HepG2 (cell line): ENCODE measurements at regions of chr17 and their contacts with region 1.

Region 1: DNA sequence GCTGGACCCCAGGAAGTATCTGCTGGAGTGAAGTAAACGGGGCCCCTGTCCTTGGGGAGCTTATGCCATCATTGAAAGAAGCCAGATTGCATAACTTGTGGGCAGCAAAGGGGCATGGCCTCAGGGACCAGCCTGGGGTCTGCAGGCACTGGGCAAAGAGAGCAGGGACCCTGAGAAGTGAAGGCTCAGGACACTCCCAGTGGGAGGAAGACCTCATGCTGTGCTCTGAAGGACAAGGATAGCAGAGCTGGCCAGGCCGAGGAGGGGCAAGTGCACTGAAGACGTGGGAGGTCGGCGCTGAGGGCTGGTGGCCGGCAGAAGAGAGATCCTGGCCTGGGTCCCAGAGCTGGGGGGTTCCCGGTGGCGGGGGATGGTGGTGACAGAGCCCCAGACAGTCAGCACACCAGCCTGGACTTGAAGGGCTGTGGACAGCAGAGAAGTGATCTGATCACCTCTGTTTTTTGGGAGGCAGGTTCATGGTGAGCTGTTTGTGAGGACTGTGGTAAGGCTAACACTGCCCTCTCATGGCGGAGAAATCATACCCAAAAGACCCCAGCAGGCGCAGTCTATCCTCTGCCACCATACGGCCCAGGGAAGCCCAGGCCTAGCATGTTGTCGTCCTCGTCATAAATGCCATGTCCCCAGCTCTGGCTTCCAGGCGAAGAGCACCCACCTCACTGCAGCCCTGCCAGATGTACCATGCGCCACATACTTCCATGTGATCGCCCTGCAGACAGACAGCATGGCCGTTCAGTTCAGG is 7.1 kb upstream of the CNP start:
- DNase-seq: peak; percentile 85
- ATAC-seq: peak; percentile 87
- H3K4me3 ChIP-seq: peak overlapping the region; percentile 55 to 75 (median 57)
- H3K27ac ChIP-seq: peak overlapping the region; percentile 35
- H3K4me1 ChIP-seq: peaks cover 69% of the 10 kb centered on the region
- H3K27me3 ChIP-seq: peaks cover 3 to 25% of the 10 kb centered on the region in 2 experiments; a peak in 4 of 5 replicates
- CTCF ChIP-seq: peak; percentile 98
- EP300 ChIP-seq: no peak
- POLR2A ChIP-seq: peak; percentile 45 to 57; a peak in 3 of 4 replicates
- RAD21 ChIP-seq: peak; percentile 94

Region 2: DNA sequence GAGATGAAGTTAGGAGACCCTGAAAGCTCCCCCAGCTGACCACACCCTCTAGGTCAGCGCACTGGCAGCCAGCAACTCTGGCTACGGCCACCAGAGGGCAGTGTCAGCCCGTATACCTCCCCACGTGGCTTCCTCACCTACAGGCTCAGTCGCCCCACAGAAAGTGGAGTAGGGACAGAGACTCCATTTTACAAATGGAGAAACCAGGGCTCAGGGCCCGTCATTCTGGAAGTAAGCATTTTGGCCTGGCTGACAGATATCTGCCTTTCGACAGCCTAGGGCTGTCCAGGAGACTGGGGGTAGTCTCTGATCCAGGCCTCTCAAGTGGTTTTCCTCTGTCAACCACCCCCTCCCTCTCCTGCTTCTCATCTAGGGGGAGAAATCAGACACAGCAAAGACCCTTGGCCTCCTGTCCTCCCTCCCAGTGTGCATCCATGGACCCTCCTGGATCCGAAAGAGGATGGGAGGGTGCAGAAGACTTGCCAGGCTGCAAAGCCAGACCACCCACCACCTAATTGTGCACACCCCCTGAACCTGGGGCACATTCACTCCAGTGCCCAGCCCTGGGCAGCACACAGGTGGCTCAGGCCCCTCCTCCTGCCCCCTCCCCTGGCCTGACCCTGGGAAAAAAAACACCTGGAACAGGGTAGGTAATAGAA is 221.3 kb before region 1 on chr17:
- CTCF ChIA-PET with region 1: interaction called, 9 read pairs
- POLR2A ChIA-PET with region 1: interaction called, 3 read pairs
- in situ Hi-C with region 1: loop called (anchors 5 kb)
- intact Hi-C with region 1: loop called (anchors 1 kb)
- DNase-seq: peak; percentile 78
- ATAC-seq: peak; percentile 79
- H3K4me3 ChIP-seq: peak overlapping the region in 1 of 3 experiments; percentile 23; a peak in 2 of 6 replicates
- H3K27ac ChIP-seq: no peak overlapping the region
- H3K4me1 ChIP-seq: peaks cover 38% of the 10 kb centered on the region
- H3K27me3 ChIP-seq: peaks cover 18 to 59% of the 10 kb centered on the region in 2 experiments
- CTCF ChIP-seq: peak; percentile 99
- EP300 ChIP-seq: no peak
- POLR2A ChIP-seq: no peak
- RAD21 ChIP-seq: peak; percentile 100

Region 3: DNA sequence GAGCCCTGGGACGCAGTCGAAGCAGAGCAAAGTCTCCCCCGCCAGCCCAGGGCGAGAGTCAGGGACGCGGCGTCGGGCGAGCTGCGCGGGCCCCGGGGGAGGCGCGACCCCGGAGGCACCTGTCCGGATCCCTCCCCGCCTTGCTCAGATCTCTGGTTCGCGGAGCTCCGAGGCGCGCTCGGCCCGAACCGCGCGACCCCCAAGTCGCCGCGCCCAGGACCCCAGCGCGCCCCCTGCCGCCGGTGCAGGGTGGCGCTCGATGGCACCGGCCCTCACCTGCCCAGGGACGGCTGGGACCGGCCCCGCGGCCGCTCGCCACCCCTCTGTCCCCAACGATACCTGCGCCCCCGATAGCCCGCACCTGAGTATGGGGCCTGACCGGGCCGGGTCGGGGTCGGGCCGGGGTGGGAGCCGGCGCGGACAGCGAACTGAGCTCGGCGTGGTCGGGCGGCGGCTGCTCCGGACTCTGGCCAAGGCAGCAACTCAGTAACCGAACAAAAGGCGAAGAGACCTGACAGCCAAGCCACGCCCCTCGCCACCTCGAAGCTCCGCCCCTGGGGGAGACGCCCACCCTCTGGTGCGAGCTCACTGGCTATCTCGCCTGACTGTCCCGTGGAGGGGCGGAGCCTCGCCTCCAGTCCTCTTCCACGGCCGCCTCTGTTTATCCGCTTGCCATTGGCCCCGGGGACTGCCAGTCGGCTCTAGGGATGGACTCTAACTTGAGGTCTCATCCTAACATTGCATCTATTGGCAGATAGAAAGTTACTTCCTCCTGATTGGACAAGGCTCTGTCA is 173.1 kb before region 1 on chr17 and contains the start of gene JUP:
- CTCF ChIA-PET with region 1: no interaction called
- POLR2A ChIA-PET with region 1: interaction called, 14 read pairs
- in situ Hi-C with region 1: no loop called
- intact Hi-C with region 1: no loop called
- DNase-seq: peak; percentile 99
- ATAC-seq: peak; percentile 97
- H3K4me3 ChIP-seq: peak within 1 kb of the TSS; percentile 60 to 90 (median 71)
- H3K27ac ChIP-seq: peak within 1 kb of the TSS; percentile 62
- H3K4me1 ChIP-seq: peaks cover 34% of the 10 kb centered on the region
- H3K27me3 ChIP-seq: no peaks in the 10 kb centered on the region; a peak in 1 of 5 replicates
- CTCF ChIP-seq: peak; percentile 83
- EP300 ChIP-seq: no peak
- POLR2A ChIP-seq: peak; percentile 89 to 97
- RAD21 ChIP-seq: peak; percentile 93
- total RNA-seq, gene JUP: 20.6 and 20.9 TPM in 2 replicates

Region 4: GRCh38 chr17:41848788-41849187 is 110.7 kb before region 1 on chr17:
- CTCF ChIA-PET with region 1: no interaction called
- POLR2A ChIA-PET with region 1: no interaction called
- in situ Hi-C with region 1: no loop called
- intact Hi-C with region 1: no loop called
- DNase-seq: no peak
- ATAC-seq: no peak
- H3K4me3 ChIP-seq: no peak overlapping the region
- H3K27ac ChIP-seq: no peak overlapping the region
- H3K4me1 ChIP-seq: no peaks in the 10 kb centered on the region
- H3K27me3 ChIP-seq: no peaks in the 10 kb centered on the region
- CTCF ChIP-seq: no peak
- EP300 ChIP-seq: no peak
- POLR2A ChIP-seq: no peak
- RAD21 ChIP-seq: no peak

Region 5: DNA sequence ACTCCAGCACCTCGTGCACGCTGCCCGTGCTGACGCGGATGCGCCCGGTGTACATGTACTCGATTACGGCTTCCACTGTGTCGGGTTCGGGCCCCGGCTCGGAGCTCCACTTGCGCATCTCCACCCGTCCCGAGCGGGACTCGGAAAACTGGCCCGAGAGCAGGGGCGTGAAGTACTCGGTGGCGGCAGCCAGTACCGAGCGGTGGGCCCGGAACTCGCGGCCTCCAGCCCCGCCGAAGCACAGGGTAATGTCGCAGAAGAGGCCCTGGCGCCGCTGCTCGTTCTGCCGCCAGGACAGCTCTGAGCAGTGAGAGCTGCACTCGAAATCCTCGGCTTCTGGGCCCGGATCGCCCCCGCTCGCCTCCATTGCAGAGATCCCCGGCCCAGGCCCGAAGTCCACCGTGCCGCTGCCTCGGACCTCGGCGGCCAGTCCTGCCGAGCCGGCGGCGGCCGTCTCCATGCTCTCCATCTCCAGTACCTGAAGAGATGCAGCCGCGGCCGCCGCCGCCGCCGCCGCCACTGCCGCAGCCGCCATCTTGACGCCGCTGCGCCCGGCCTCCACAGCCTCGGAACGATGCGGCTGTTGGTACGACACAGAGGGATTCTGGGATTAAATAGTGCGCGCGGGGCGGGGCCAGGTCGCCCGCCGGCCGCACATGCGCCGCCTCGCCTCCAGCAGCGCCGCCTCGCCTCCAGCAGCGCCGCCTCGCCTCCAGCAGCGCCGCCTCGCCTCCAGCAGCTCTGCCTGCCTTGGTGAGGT is 94.5 kb before region 1 on chr17 and contains the start of gene KLHL11:
- CTCF ChIA-PET with region 1: no interaction called
- POLR2A ChIA-PET with region 1: interaction called, 22 read pairs
- in situ Hi-C with region 1: no loop called
- intact Hi-C with region 1: no loop called
- DNase-seq: peak; percentile 85
- ATAC-seq: peak; percentile 93
- H3K4me3 ChIP-seq: peak within 1 kb of the TSS; percentile 83 to 98 (median 91)
- H3K27ac ChIP-seq: peak within 1 kb of the TSS; percentile 79
- H3K4me1 ChIP-seq: peaks cover 56% of the 10 kb centered on the region
- H3K27me3 ChIP-seq: no peaks in the 10 kb centered on the region; a peak in 1 of 5 replicates
- CTCF ChIP-seq: no peak; the same call in 1 of the 2 replicates
- EP300 ChIP-seq: peak in 1 of 2 experiments; percentile 26; a peak in 1 of 4 replicates
- POLR2A ChIP-seq: peak; percentile 82 to 93
- RAD21 ChIP-seq: peak; percentile 50; the same call in 1 of the 2 replicates
- total RNA-seq, gene KLHL11: 27.5 and 37.1 TPM in 2 replicates

Region 6: DNA sequence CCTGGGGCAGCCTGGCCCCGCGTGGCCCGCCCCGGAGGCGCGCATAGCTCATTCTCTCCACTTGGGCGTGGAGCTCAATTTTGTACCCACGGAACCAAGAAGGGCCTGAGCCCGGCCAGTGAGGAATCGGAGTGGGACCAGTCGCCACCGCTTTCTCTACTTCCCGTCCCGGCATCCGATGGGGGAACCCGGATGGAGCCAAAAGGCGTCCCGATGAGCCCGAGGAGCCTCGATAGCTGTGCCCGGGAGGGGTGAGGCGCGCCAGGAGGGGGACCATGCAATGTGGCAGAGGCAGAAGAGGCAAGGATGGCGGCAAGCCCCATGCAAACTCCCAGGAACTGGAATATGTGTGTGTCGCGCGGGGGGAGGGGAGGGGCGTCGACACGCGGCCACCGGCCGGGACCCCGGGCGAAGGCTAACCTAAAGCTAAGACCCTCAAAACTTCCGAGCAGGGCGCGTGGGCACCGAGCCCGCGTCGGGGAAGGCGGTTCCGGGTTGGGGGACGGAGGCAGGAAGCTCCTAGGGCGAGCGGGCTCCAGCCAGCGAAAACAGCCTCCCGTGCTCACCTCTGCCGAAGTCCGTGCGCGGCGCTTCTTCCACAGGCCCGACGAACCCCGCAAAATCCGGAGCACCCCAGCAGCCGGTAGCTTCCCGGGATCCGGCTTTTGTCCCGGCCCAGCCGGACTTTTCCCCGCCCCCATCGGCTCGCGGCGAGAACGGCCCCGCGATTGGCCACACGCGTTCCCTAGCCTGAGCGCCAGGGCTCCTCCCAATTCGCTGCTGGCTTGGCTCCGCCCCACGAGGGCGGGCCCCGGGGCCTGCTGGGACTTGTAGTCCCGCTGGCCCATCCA is 41.0 kb before region 1 on chr17 and contains the start of gene ACLY:
- CTCF ChIA-PET with region 1: interaction called, 3 read pairs
- POLR2A ChIA-PET with region 1: interaction called, 33 read pairs
- in situ Hi-C with region 1: no loop called
- intact Hi-C with region 1: loop called (anchors 5 kb)
- DNase-seq: peak; percentile 97
- ATAC-seq: peak; percentile 93
- H3K4me3 ChIP-seq: peak within 1 kb of the TSS; percentile 96 to 98 (median 97)
- H3K27ac ChIP-seq: peak within 1 kb of the TSS; percentile 81
- H3K4me1 ChIP-seq: peaks cover 71% of the 10 kb centered on the region
- H3K27me3 ChIP-seq: no peaks in the 10 kb centered on the region; a peak in 1 of 5 replicates
- CTCF ChIP-seq: no peak
- EP300 ChIP-seq: 0 out of 4 replicates have a peak, but pooled peaks of 1 of the 2 experiments have one; percentile 45
- POLR2A ChIP-seq: peak; percentile 88 to 97
- RAD21 ChIP-seq: no peak; the same call in none of the 2 replicates
- total RNA-seq, gene ACLY: 218 and 277 TPM in 2 replicates

Region 7: DNA sequence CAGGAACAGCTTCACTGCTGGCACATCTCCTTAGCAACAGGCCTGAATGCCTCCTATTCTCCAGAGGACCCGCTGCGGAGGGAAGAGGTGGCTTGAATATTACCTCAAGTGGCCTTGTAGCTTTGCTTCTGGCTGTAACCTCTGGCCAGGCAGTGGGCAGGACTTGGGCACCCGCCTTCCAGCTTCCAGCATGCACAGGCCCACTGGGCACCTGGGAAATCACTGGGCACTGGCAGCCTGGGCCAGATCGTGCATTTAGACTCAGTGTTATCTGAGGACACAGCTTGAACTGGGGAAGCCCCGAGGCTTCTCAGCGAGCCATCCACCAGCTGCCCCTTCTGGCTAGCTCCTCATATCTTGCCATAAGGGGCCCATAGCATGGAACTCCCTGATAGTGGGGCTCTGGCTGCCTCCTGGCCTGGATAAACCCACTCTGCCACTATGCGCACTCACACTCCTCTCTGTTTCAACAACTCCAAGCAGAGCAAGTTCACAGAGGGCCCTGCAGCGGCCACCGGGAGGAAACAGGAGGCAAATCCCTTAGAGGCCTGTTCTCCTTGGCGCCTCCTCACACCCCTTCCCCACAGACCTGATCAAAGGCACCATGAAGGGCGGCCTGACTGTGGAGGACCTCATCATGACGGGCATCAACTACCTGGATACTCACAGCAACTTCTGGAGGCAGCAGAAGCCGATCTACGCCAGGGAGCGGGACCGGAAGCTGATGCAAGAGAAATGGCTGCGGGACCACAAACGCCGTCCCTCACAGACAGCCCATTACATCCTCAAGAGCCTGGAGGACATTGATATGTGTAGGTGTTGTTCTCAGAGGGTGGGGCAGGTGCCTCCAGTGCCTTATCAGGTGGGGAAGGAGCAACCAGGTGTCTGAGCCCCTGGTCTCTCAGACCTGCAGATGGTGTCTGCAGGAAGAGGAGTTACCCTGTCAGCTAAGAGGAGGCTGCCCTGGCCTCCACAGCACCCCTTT is 21.3 kb before region 1 on chr17:
- CTCF ChIA-PET with region 1: no interaction called
- POLR2A ChIA-PET with region 1: interaction called, 11 read pairs
- in situ Hi-C with region 1: no loop called
- intact Hi-C with region 1: no loop called
- DNase-seq: no peak
- ATAC-seq: no peak
- H3K4me3 ChIP-seq: no peak overlapping the region
- H3K27ac ChIP-seq: no peak overlapping the region
- H3K4me1 ChIP-seq: peaks cover 38% of the 10 kb centered on the region
- H3K27me3 ChIP-seq: no peaks in the 10 kb centered on the region
- CTCF ChIP-seq: no peak
- EP300 ChIP-seq: no peak
- POLR2A ChIP-seq: no peak
- RAD21 ChIP-seq: no peak

Region 8: DNA sequence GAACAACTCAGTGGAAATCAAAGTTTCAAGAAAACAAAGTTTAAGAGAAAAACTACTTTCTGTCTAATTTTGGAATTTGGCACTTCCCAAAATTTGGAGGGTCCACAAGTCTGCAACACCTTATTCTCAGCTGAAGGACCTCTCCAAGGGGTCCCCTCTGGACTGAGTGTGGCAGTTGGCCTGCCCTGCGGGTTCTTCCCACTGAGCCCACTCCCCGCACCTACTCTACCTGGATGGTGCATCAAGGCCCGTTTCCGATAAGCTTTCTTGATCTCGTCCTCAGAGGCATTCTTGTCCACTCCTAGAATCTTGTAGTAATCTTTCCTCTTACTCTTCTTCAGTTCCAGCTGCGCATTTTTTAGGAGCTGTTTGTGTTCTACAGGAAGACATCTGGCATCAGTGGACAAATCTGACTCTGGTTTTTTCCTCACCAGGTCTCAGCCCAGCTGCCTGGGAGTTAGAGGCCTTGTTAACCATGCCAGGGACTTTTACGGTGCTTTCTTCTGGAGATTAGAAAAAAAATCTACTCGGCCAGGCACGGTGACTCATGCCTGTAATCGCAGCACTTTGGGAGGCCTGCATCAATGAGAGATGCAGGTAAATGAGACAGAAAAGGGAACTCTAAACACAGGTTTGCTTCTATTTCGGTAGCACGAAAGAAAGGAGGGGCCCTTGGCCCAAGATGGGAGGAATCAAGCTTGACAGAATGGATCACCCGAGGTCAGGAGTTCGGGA is 22.7 kb after region 1 on chr17:
- CTCF ChIA-PET with region 1: no interaction called
- POLR2A ChIA-PET with region 1: no interaction called
- in situ Hi-C with region 1: no loop called
- intact Hi-C with region 1: no loop called
- DNase-seq: no peak
- ATAC-seq: no peak
- H3K4me3 ChIP-seq: no peak overlapping the region
- H3K27ac ChIP-seq: no peak overlapping the region
- H3K4me1 ChIP-seq: no peaks in the 10 kb centered on the region
- H3K27me3 ChIP-seq: no peaks in the 10 kb centered on the region
- CTCF ChIP-seq: no peak
- EP300 ChIP-seq: no peak
- POLR2A ChIP-seq: no peak
- RAD21 ChIP-seq: no peak

Region 9: GRCh38 chr17:42019509-42020404 is 60.2 kb after region 1 on chr17 and contains the start of gene NKIRAS2:
- CTCF ChIA-PET with region 1: interaction called, 5 read pairs
- POLR2A ChIA-PET with region 1: interaction called, 180 read pairs
- in situ Hi-C with region 1: no loop called
- intact Hi-C with region 1: no loop called
- DNase-seq: peak; percentile 89
- ATAC-seq: peak; percentile 75
- H3K4me3 ChIP-seq: peak within 1 kb of the TSS; percentile 89 to 91 (median 89)
- H3K27ac ChIP-seq: peak within 1 kb of the TSS; percentile 64
- H3K4me1 ChIP-seq: peaks cover 62% of the 10 kb centered on the region
- H3K27me3 ChIP-seq: peaks cover 0 to 3% of the 10 kb centered on the region in 2 experiments; a peak in 1 of 5 replicates
- CTCF ChIP-seq: peak; percentile 99
- EP300 ChIP-seq: no peak; a peak in 1 of 4 replicates
- POLR2A ChIP-seq: peak; percentile 24 to 88; a peak in 3 of 4 replicates
- RAD21 ChIP-seq: peak; percentile 37; the same call in 1 of the 2 replicates
- total RNA-seq, gene NKIRAS2: 26.8 and 27.9 TPM in 2 replicates